K562 (cell line): ENCODE measurements at regions of chr11 and their contacts with region 1.

Region 1: GRCh38 chr11:36056160-36056751 is 112.4 kb downstream of the LDLRAD3 start:
- DNase-seq: peak; percentile 47 to 66 (median 62)
- ATAC-seq: peak; percentile 94
- H3K4me3 ChIP-seq: no peak overlapping the region
- H3K27ac ChIP-seq: no peak overlapping the region
- H3K4me1 ChIP-seq: peaks cover 0 to 6% of the 10 kb centered on the region in 2 experiments; a peak in 1 of 5 replicates
- H3K27me3 ChIP-seq: no peaks in the 10 kb centered on the region; a peak in 1 of 5 replicates
- CTCF ChIP-seq: peak; percentile 62 to 75 (median 65)
- EP300 ChIP-seq: no peak
- POLR2A ChIP-seq: no peak
- RAD21 ChIP-seq: peak; percentile 53 to 69

Region 2: DNA sequence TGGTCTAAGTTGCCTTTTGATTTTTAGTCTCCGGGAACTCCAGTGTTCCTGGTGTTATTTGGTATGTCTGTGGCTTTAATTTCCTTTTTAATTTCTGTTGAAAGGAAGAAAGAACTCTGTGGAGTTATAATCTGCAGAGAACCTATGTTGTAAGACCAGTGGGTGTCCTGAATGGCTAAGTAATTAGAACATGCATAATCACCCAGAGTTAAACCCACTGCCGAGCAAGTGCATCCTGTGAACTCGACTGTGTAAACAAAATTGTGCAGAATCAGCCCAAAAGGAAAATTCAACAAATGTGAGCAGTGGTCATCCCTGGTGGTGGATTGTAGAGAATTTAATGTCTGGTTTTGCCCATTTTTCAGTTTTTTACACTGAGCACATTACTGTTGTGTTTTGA is 70.4 kb after region 1 on chr11:
- CTCF ChIA-PET with region 1: no interaction called
- POLR2A ChIA-PET with region 1: no interaction called
- in situ Hi-C with region 1: no loop called
- intact Hi-C with region 1: loop called (anchors 5 kb)
- DNase-seq: no peak
- ATAC-seq: 0 out of 3 replicates have a peak, but pooled peaks have one; percentile 15
- H3K4me3 ChIP-seq: no peak overlapping the region
- H3K27ac ChIP-seq: no peak overlapping the region
- H3K4me1 ChIP-seq: peaks cover 11 to 31% of the 10 kb centered on the region in 2 experiments; a peak in 4 of 5 replicates
- H3K27me3 ChIP-seq: no peaks in the 10 kb centered on the region
- CTCF ChIP-seq: no peak
- EP300 ChIP-seq: no peak
- POLR2A ChIP-seq: no peak
- RAD21 ChIP-seq: no peak